ENCODE measurements at regions of chr2 and their contacts with region 1.

Region 1: DNA sequence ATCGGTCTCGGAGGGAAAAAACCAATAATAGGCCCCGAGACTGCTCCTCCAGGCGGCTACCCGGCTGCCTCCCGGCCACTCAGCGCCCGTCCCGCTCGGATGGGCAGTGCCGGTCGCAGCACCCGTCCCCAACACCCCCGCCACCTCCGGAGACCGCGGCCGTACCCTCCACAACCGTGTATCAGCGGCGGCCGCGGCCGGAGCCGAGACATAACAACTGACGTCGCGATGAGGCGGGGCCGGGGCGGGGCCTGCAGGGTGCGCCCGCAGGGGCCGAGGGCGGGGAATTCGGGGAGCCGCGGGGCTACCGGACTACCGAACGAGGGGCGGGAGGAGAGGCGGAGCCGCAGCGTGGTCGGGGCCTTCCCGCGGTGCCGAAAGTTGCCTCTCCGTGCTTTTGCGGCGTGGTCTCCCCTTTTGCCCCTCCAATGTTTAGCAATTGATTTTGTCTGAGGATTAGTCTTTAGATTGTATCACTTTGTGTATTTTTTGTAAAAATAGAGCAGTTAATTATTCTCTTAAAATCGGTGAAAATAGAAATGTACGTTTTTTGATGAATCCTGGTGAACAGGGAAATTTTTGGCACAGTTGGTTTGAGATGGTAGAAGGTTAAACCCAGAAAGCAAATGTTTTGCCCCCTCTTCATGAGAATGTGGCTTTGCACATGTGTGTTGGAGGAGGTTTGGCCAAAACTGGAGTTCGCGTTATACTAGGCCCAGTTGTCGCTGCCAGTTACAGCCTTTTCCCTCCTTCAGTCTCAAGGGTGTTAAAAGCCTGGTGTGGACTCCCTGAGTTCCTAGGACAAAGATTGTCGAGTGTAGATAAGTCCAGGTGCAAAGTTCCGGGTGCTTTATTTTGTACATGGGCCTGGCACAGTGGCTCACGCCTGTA is at the start of gene RNF103:
- DNase-seq: peak; percentile 91
- H3K4me3 ChIP-seq: peak within 1 kb of the TSS; percentile 68 to 92 (median 74)
- H3K27ac ChIP-seq: peak within 1 kb of the TSS; percentile 90
- H3K4me1 ChIP-seq: no peaks in the 10 kb centered on the region
- H3K27me3 ChIP-seq: no peaks in the 10 kb centered on the region
- CTCF ChIP-seq: no peak
- total RNA-seq, gene RNF103: 18.1 to 27.3 TPM

Region 2: DNA sequence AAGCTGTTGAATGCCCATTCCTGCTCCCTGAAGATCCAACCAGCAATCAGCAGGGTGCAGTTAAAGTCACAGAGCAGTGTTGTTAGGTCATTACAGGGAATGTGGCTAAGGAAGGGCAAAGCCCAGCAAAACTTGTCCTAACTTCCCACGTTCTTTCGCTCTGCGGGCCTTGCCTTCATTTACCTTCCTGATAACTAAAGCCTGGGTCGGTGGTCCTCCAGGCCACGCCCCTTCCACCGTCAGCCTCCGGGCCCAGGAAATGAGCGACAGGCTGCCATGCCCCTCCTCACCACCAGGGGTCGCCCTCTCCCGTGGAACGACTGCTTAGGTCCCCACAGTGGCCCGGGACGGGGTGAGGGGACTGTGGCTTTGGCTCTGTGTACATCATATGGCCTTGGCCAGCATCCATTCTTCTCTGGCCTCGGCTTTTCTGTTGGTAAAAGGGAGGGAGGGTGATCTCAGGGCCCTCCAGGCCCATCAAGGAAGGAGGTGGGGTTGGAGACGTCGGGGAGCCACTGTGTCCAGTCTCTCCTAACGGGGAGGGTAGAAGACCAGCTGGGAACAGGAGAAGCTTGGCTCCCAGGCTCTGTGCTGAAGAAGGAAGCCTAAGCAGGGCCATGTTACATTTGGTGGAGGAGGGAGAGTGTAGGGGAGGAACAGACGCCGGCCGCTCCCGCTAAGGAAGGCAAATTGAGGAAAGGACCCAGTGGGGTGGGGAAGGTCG is 1203.2 kb before region 1 on chr2:
- CTCF ChIA-PET with region 1: no interaction called
- dilution Hi-C with region 1: no loop called
- in situ Hi-C with region 1: no loop called
- intact Hi-C with region 1: no loop called
- DNase-seq: peak; percentile 21
- H3K4me3 ChIP-seq: peak overlapping the region in 1 of 3 experiments; percentile 12
- H3K27ac ChIP-seq: no peak overlapping the region
- H3K4me1 ChIP-seq: peaks cover 30% of the 10 kb centered on the region
- H3K27me3 ChIP-seq: no peaks in the 10 kb centered on the region
- CTCF ChIP-seq: peak; percentile 96 to 99

Region 3: GRCh38 chr2:86195055-86195807 is 428.7 kb before region 1 on chr2 and contains the start of gene IMMT:
- CTCF ChIA-PET with region 1: no interaction called
- dilution Hi-C with region 1: no loop called
- in situ Hi-C with region 1: no loop called
- intact Hi-C with region 1: loop called (anchors 5 kb)
- DNase-seq: peak; percentile 95
- H3K4me3 ChIP-seq: peak within 1 kb of the TSS; percentile 63 to 99 (median 81)
- H3K27ac ChIP-seq: peak within 1 kb of the TSS; percentile 91
- H3K4me1 ChIP-seq: peaks cover 13% of the 10 kb centered on the region
- H3K27me3 ChIP-seq: no peaks in the 10 kb centered on the region
- CTCF ChIP-seq: no peak
- total RNA-seq, gene IMMT: 78.9 to 102 TPM

Region 4: GRCh38 chr2:86440631-86441391 is 183.1 kb before region 1 on chr2 and contains the start of gene KDM3A:
- CTCF ChIA-PET with region 1: no interaction called
- dilution Hi-C with region 1: no loop called
- in situ Hi-C with region 1: no loop called
- intact Hi-C with region 1: loop called (anchors 5 kb)
- DNase-seq: peak; percentile 100
- H3K4me3 ChIP-seq: peak within 1 kb of the TSS; percentile 71 to 97 (median 77)
- H3K27ac ChIP-seq: peak within 1 kb of the TSS; percentile 98
- H3K4me1 ChIP-seq: peaks cover 16% of the 10 kb centered on the region
- H3K27me3 ChIP-seq: no peaks in the 10 kb centered on the region
- CTCF ChIP-seq: no peak
- total RNA-seq, gene KDM3A: 20.0 to 29.5 TPM

Region 5: DNA sequence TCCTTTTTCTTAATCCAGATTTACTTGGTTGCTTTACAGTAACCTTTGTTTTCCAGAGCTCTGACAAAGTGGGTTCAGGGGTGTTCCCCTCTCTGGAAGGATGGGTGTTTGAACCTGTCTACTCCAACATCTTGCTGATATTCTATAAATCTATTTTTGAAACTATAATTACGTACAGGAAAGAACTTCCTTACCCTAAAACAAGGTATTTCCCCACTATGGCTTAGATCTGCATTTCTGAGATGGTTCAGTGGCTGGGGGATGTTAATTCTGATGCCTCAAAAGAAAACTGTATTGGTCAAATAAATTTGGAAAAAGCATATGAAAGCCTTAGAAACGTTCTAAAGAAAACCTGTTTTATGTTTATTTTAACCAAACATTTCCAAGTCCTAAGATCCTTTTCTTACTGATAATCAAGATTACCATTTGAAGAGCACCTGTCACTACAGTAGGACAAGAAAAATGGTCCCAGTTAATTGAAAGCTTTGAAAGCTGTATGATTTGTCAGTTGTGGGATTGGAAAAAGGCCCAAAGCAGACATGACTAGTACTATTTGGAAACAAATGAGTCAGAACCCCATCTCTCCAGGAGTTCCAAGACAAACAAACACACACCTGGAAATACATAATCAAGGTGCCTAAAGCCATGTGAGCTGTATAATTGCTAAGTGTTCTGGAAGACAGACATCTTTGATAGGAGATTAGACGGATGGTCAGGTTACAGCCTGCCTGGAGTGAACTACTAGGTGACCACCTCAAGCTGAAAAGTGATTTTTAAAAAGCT is 125.2 kb before region 1 on chr2:
- CTCF ChIA-PET with region 1: no interaction called
- dilution Hi-C with region 1: no loop called
- in situ Hi-C with region 1: loop called in 1 of 2 experiments (anchors 25 kb)
- intact Hi-C with region 1: loop called (anchors 5 kb)
- DNase-seq: peak; percentile 89
- H3K4me3 ChIP-seq: no peak overlapping the region
- H3K27ac ChIP-seq: no peak overlapping the region
- H3K4me1 ChIP-seq: peaks cover 13% of the 10 kb centered on the region
- H3K27me3 ChIP-seq: no peaks in the 10 kb centered on the region
- CTCF ChIP-seq: no peak

Region 6: GRCh38 chr2:86675511-86676015 is 51.7 kb after region 1 on chr2:
- CTCF ChIA-PET with region 1: no interaction called
- dilution Hi-C with region 1: no loop called
- in situ Hi-C with region 1: no loop called
- intact Hi-C with region 1: loop called (anchors 5 kb)
- DNase-seq: peak; percentile 20
- H3K4me3 ChIP-seq: no peak overlapping the region
- H3K27ac ChIP-seq: no peak overlapping the region
- H3K4me1 ChIP-seq: no peaks in the 10 kb centered on the region
- H3K27me3 ChIP-seq: no peaks in the 10 kb centered on the region
- CTCF ChIP-seq: peak; percentile 27 to 43

Region 7: GRCh38 chr2:86764661-86765307 is 140.9 kb after region 1 on chr2:
- CTCF ChIA-PET with region 1: no interaction called
- dilution Hi-C with region 1: no loop called
- in situ Hi-C with region 1: no loop called
- intact Hi-C with region 1: loop called (anchors 5 kb)
- DNase-seq: peak; percentile 35
- H3K4me3 ChIP-seq: no peak overlapping the region
- H3K27ac ChIP-seq: no peak overlapping the region
- H3K4me1 ChIP-seq: no peaks in the 10 kb centered on the region
- H3K27me3 ChIP-seq: no peaks in the 10 kb centered on the region
- CTCF ChIP-seq: peak; percentile 56 to 62